ENCODE measurements at regions of chr1 and their contacts with region 1.

Region 1: GRCh38 chr1:84944767-84945486 is 51.9 kb upstream of the LPAR3 start:
- DNase-seq: peak; percentile 91
- H3K4me3 ChIP-seq: peak overlapping the region; percentile 55
- H3K27ac ChIP-seq: peak overlapping the region; percentile 52
- H3K4me1 ChIP-seq: peaks cover 20% of the 10 kb centered on the region
- CTCF ChIP-seq: peak; percentile 99

Region 2: DNA sequence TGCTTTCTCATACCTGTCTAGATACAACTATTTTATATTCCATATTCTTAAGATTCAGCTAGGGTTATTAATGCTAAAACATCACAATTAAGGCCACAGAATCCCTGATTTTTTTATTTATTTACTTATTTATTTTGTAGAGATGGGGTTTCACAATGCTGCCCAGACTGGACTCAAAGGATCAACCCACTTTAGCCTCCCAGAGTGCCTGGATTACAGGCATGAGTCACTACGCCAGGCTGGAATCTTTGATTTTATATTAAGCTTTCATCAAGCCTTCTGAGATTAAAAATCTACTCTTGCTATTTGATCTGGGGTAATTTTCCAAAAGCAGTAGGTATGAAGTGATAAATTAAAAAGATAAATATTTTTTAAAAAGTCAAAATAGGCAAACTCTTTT is 13.0 kb after region 1 on chr1:
- CTCF ChIA-PET with region 1: interaction called, 3 read pairs
- POLR2A ChIA-PET with region 1: interaction called, 10 read pairs
- intact Hi-C with region 1: no loop called
- DNase-seq: no peak
- H3K4me3 ChIP-seq: no peak overlapping the region
- H3K27ac ChIP-seq: no peak overlapping the region
- H3K4me1 ChIP-seq: no peaks in the 10 kb centered on the region
- CTCF ChIP-seq: no peak

Region 3: GRCh38 chr1:84973498-84974334 is 28.8 kb after region 1 on chr1:
- CTCF ChIA-PET with region 1: no interaction called
- POLR2A ChIA-PET with region 1: interaction called, 3 read pairs
- intact Hi-C with region 1: loop called (anchors 1 kb)
- DNase-seq: peak; percentile 61
- H3K4me3 ChIP-seq: peak overlapping the region; percentile 26
- H3K27ac ChIP-seq: peak overlapping the region; percentile 54
- H3K4me1 ChIP-seq: peaks cover 52% of the 10 kb centered on the region
- CTCF ChIP-seq: peak; percentile 67

Region 4: DNA sequence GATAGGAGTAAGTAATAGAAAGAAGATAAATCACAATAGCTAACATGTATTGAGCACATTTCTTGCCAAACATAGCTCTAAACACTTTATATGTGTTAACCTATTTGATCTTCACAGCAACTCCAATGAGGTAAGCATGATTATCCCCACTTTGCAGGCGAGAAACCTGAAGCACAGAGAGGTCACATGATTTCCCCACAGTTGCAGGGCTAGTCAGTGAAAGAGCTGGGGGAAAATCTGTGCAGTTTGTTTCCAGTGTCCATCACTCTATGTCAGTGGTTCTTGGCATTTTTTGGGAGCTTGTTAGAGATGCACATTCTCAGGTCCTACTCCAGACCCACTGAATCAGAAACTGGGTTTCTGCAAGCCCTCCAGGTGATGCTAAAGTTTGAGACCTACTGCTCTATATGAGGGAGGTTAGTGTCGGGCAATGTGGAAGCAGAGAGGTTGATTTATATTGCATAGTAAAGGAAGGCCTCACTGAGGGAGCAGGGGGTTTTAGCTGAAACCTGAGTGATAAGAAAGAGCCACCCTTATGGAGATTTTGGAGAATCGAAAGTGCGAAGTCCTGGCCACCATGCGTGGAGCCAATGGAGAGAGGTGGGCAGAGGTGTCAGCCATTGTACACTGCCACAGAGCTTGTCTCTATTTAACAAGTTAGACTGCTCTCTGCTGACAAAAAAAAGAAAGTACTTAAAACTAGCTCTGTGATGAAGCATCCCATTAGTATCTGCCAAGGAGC is 82.5 kb after region 1 on chr1:
- CTCF ChIA-PET with region 1: interaction called, 13 read pairs
- POLR2A ChIA-PET with region 1: interaction called, 6 read pairs
- intact Hi-C with region 1: loop called (anchors 1 kb)
- DNase-seq: peak; percentile 58
- H3K4me3 ChIP-seq: no peak overlapping the region
- H3K27ac ChIP-seq: no peak overlapping the region
- H3K4me1 ChIP-seq: peaks cover 4% of the 10 kb centered on the region
- CTCF ChIP-seq: peak; percentile 70

Region 5: GRCh38 chr1:85078903-85079302 is 134.0 kb after region 1 on chr1:
- CTCF ChIA-PET with region 1: no interaction called
- POLR2A ChIA-PET with region 1: no interaction called
- intact Hi-C with region 1: loop called (anchors 2 kb)
- DNase-seq: peak; percentile 21
- H3K4me3 ChIP-seq: no peak overlapping the region
- H3K27ac ChIP-seq: no peak overlapping the region
- H3K4me1 ChIP-seq: no peaks in the 10 kb centered on the region
- CTCF ChIP-seq: peak; percentile 50

Region 6: GRCh38 chr1:85259118-85259911 is 314.4 kb after region 1 on chr1 and contains the start of gene C1orf52:
- CTCF ChIA-PET with region 1: interaction called, 5 read pairs
- POLR2A ChIA-PET with region 1: interaction called, 4 read pairs
- intact Hi-C with region 1: loop called (anchors 1 kb)
- DNase-seq: peak; percentile 95
- H3K4me3 ChIP-seq: peak within 1 kb of the TSS; percentile 98
- H3K27ac ChIP-seq: peak within 1 kb of the TSS; percentile 47
- H3K4me1 ChIP-seq: peaks cover 19% of the 10 kb centered on the region
- CTCF ChIP-seq: peak; percentile 90
- total RNA-seq, gene C1orf52: 35.6 and 55.3 TPM in 2 replicates